ENCODE measurements at regions of chr19 and their contacts with region 1.

Region 1: GRCh38 chr19:54189735-54190502 is 539 bp upstream of the MBOAT7 start:
- DNase-seq: peak; percentile 100
- ATAC-seq: peak; percentile 64
- H3K4me3 Mint-ChIP-seq: peak overlapping the region; percentile 93
- H3K27ac Mint-ChIP-seq: peak overlapping the region; percentile 97
- H3K4me1 Mint-ChIP-seq: peaks cover 22% of the 10 kb centered on the region
- H3K27me3 Mint-ChIP-seq: no peaks in the 10 kb centered on the region

Region 2: GRCh38 chr19:54115109-54116063 is 74.5 kb before region 1 on chr19 and contains the starts of genes PRPF31 and TFPT:
- POLR2A ChIA-PET with region 1: interaction called, 10 read pairs
- DNase-seq: peak; percentile 89
- ATAC-seq: peak; percentile 86
- H3K4me3 Mint-ChIP-seq: peak within 1 kb of the TSS; percentile 95
- H3K27ac Mint-ChIP-seq: peak within 1 kb of the TSS; percentile 91
- H3K4me1 Mint-ChIP-seq: peaks cover 28% of the 10 kb centered on the region
- H3K27me3 Mint-ChIP-seq: no peaks in the 10 kb centered on the region
- total RNA-seq, gene PRPF31: 66.3 to 69.3 TPM
- total RNA-seq, gene TFPT: 37.9 to 43.3 TPM

Region 3: GRCh38 chr19:54159352-54160181 is 30.4 kb before region 1 on chr19 and contains the start of gene LENG1:
- POLR2A ChIA-PET with region 1: interaction called, 13 read pairs
- DNase-seq: peak; percentile 91
- ATAC-seq: peak; percentile 86
- H3K4me3 Mint-ChIP-seq: peak within 1 kb of the TSS; percentile 97
- H3K27ac Mint-ChIP-seq: peak within 1 kb of the TSS; percentile 99
- H3K4me1 Mint-ChIP-seq: peaks cover 39% of the 10 kb centered on the region
- H3K27me3 Mint-ChIP-seq: no peaks in the 10 kb centered on the region
- total RNA-seq, gene LENG1: 10.2 to 12.8 TPM

Region 4: GRCh38 chr19:54179244-54179852 is 10.6 kb before region 1 on chr19:
- POLR2A ChIA-PET with region 1: no interaction called
- DNase-seq: no peak
- ATAC-seq: no peak
- H3K4me3 Mint-ChIP-seq: no peak overlapping the region
- H3K27ac Mint-ChIP-seq: no peak overlapping the region
- H3K4me1 Mint-ChIP-seq: peaks cover 3% of the 10 kb centered on the region
- H3K27me3 Mint-ChIP-seq: no peaks in the 10 kb centered on the region

Region 5: GRCh38 chr19:54203151-54203611 is 13.3 kb after region 1 on chr19:
- POLR2A ChIA-PET with region 1: interaction called, 106 read pairs
- DNase-seq: no peak
- ATAC-seq: no peak
- H3K4me3 Mint-ChIP-seq: peak overlapping the region; percentile 100
- H3K27ac Mint-ChIP-seq: peak overlapping the region; percentile 54
- H3K4me1 Mint-ChIP-seq: peaks cover 59% of the 10 kb centered on the region
- H3K27me3 Mint-ChIP-seq: no peaks in the 10 kb centered on the region

Region 6: DNA sequence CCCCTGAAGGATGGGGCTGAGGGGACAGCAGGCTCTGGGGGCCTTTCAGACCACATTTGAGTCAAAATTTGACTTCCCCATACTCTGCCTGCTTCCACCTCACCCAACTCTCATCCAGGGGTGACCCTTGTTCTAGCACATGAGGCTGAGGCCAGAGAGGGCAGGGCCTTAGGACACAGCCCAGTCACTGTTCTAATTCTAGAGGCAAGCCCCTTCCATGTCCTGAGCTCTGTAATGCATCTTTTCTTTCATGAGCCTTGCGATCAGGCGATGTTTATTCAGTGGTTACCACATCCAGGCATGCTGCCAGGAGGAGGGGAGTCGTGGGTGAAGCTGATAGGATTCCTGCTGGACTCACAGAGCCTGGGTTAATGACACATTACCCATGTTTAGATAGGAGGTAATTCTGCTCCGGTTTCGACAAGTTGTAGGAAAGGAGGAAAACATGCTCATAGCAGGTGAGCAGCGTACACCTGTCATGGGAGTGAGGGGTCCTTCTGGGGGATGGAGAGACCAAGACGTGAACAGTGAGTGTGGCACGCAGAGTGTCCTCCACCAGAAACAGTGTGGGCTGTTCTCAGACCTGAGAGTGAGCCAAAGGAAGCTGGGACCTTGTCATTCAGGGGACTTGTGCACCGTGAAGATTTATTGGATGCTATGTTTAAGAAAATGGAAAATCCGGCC is 20.0 kb after region 1 on chr19:
- POLR2A ChIA-PET with region 1: interaction called, 18 read pairs
- DNase-seq: no peak
- ATAC-seq: no peak
- H3K4me3 Mint-ChIP-seq: peak overlapping the region; percentile 35
- H3K27ac Mint-ChIP-seq: peak overlapping the region; percentile 60
- H3K4me1 Mint-ChIP-seq: peaks cover 51% of the 10 kb centered on the region
- H3K27me3 Mint-ChIP-seq: peaks cover 4% of the 10 kb centered on the region

Measured in activated naive CD8-positive, alpha-beta T cell treated with anti-CD3 and anti-CD28 coated beads, Interleukin-2, amount 10 ng/mL, durations not matched to agents 7 days and 5 days (primary cell).